IMR-90 (cell line): ENCODE measurements at regions of chr3 and their contacts with region 1.

Region 1: DNA sequence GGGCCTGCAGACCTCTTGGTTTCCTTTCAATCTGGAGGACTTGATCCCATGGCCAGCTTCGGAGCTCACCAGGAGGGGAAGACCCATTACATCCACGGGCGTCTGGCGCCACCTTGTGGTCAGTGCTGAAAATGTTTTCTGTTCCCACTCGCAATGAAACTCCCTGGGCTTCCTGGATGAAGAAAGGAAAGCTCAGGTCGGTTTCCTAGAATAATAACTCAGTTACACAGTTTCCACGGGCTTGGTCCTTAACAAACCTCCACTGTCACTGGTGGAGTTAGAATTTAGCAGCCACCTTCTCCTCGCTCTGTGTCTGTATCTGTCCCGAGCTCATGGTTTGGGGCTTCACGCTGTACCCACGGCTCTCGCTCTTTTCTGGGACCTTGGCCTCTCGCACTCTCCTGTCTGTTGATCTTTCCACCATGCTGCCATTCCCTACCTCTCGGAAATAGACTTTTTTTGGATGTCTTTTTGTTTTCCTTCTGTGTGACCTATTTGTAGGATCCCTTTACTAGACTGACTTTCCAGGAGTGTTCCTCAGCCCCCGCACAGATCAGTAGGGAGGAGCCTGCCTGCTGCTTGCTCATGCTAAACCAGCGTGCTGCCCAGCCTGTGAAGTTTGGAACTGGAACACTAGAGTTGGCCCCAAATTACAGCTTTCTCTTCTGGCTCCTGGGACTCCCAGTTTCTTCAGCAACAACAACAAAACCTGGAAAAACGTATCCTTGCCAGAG is 56.3 kb downstream of the IL20RB start:
- DNase-seq: peak; percentile 86
- ATAC-seq: peak; percentile 92
- H3K4me3 ChIP-seq: peak overlapping the region; percentile 42
- H3K27ac ChIP-seq: peak overlapping the region; percentile 24
- H3K4me1 ChIP-seq: peaks cover 4% of the 10 kb centered on the region; the same call in 1 of the 2 replicates
- H3K27me3 ChIP-seq: no peaks in the 10 kb centered on the region
- CTCF ChIP-seq: peak; percentile 95
- POLR2A ChIP-seq: peak; percentile 63; the same call in 1 of the 2 replicates
- RAD21 ChIP-seq: peak; percentile 99

Region 2: DNA sequence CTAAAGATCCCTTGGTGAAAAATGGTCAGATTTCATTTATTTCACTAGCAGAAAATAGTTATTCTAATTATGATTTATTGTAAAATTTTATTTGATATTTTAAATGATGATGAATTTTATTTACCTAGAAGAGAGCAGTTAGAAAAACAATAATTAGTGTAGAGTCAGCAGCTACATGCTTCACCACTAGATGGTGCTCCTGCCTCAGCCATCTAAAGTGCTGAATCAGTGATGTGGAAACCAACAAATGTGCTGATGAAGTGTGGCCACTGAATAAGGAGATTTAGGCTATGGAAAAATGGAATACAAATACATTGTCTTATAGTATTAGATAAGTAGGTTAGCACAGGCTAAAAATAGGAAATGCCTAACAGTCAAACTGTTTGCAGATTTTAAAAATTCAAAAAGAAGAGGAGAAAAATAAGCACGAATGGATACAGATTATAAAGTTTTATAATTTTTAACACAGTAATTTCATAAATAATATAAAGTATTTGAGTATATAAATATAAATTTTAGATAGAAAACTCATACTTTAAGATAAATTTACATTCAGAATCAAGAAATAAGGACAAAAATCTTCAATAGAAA is 938.8 kb before region 1 on chr3:
- CTCF ChIA-PET with region 1: no interaction called
- POLR2A ChIA-PET with region 1: no interaction called
- dilution Hi-C with region 1: no loop called
- in situ Hi-C with region 1: no loop called
- intact Hi-C with region 1: loop called (anchors 1 kb)
- DNase-seq: peak; percentile 80
- ATAC-seq: peak; percentile 62
- H3K4me3 ChIP-seq: no peak overlapping the region
- H3K27ac ChIP-seq: no peak overlapping the region
- H3K4me1 ChIP-seq: peaks cover 10% of the 10 kb centered on the region
- H3K27me3 ChIP-seq: no peaks in the 10 kb centered on the region
- CTCF ChIP-seq: peak; percentile 96
- POLR2A ChIP-seq: no peak
- RAD21 ChIP-seq: peak; percentile 95

Region 3: GRCh38 chr3:136300444-136300843 is 713.7 kb before region 1 on chr3:
- CTCF ChIA-PET with region 1: interaction called, 10 read pairs
- POLR2A ChIA-PET with region 1: no interaction called
- dilution Hi-C with region 1: no loop called
- in situ Hi-C with region 1: loop called (anchors 5 kb)
- intact Hi-C with region 1: no loop called
- DNase-seq: no peak
- ATAC-seq: no peak
- H3K4me3 ChIP-seq: no peak overlapping the region
- H3K27ac ChIP-seq: no peak overlapping the region
- H3K4me1 ChIP-seq: no peaks in the 10 kb centered on the region
- H3K27me3 ChIP-seq: no peaks in the 10 kb centered on the region
- CTCF ChIP-seq: no peak
- POLR2A ChIP-seq: no peak
- RAD21 ChIP-seq: no peak

Region 4: DNA sequence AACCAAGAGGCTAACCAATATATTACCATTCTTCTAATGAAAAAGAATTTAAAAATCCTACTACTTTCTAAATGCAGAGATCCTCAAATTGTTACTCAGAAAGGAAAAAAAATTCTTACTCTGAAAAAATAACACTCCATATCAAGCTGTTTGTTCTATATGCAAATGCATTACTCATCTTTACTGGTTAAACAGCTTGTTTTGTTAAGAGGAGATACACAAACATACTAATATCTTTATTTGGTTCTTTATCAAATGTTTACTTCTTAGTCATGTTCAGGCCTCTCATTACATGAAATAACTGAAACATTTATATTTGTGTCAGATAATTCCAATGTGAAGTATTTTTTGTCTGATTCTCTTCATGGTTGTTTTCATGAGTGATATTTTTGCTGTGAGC is 617.2 kb before region 1 on chr3:
- CTCF ChIA-PET with region 1: interaction called, 3 read pairs
- POLR2A ChIA-PET with region 1: no interaction called
- dilution Hi-C with region 1: no loop called
- in situ Hi-C with region 1: no loop called
- intact Hi-C with region 1: loop called (anchors 10 kb)
- DNase-seq: peak; percentile 73
- ATAC-seq: peak; percentile 81
- H3K4me3 ChIP-seq: no peak overlapping the region
- H3K27ac ChIP-seq: peak overlapping the region; percentile 93; the same call in 1 of the 2 replicates
- H3K4me1 ChIP-seq: peaks cover 8% of the 10 kb centered on the region
- H3K27me3 ChIP-seq: no peaks in the 10 kb centered on the region
- CTCF ChIP-seq: no peak
- POLR2A ChIP-seq: no peak
- RAD21 ChIP-seq: no peak

Region 5: DNA sequence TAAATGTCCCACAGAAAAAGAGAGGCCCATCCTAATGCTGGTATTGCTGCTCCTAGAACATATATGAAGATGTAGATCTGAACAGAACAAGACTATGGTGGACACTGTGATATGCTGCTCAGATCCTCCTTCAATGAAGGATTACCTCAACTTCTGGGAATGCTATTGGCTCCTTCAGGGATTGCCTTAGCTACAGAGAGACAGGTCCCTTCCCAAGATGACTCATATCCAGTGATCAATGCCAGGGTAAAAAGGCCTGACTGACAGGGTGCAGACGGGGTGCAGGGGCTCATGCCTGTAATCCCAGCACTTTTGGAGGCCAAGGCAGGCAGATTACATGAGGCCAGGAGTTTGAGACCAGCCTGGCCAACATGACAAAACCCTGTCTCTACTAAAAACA is 241.4 kb before region 1 on chr3:
- CTCF ChIA-PET with region 1: interaction called, 3 read pairs
- POLR2A ChIA-PET with region 1: no interaction called
- dilution Hi-C with region 1: no loop called
- in situ Hi-C with region 1: no loop called
- intact Hi-C with region 1: loop called (anchors 5 kb)
- DNase-seq: peak; percentile 53
- ATAC-seq: peak; percentile 70
- H3K4me3 ChIP-seq: no peak overlapping the region
- H3K27ac ChIP-seq: no peak overlapping the region
- H3K4me1 ChIP-seq: no peaks in the 10 kb centered on the region; the same call in 1 of the 2 replicates
- H3K27me3 ChIP-seq: no peaks in the 10 kb centered on the region
- CTCF ChIP-seq: no peak
- POLR2A ChIP-seq: no peak
- RAD21 ChIP-seq: no peak

Region 6: DNA sequence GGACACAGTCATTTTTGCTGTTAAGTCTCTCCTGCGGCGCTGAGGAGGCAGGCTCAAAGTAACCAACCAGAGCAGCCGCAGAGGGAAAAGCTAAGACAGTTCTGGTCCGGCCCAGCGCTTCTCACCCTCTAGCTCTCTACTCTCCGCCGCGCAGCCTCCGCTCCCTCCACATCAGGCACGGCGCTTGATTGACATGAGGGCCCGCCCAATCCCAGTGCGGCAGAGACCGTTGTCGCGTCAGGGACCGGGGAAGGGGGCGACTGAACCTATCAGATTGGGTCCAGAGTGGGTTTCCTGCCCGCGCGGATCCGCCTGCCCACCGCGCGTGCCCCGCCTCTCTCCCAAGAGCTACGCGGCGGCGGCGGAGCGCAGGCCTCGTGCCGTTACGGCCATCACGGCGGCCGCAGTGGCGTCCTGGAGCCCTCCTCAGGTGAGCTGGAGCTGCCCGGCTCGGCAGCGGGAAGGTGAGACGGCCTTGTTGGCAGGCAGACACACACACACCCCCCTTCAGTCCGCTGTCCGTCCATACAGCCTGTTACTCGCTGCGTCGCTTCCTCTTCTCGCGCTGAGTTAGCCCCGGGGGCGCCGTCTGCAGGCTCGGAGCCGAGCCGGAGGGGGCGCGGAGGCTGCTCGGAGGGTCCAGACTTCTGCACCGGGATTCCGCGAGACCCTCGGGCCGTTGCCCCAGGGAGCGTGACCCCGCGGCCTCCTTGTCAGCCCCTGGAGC is 152.1 kb before region 1 on chr3 and contains the start of gene NCK1:
- CTCF ChIA-PET with region 1: interaction called, 12 read pairs
- POLR2A ChIA-PET with region 1: no interaction called
- dilution Hi-C with region 1: no loop called
- in situ Hi-C with region 1: no loop called
- intact Hi-C with region 1: loop called (anchors 2 kb)
- DNase-seq: peak; percentile 98
- ATAC-seq: peak; percentile 98
- H3K4me3 ChIP-seq: peak within 1 kb of the TSS; percentile 85
- H3K27ac ChIP-seq: peak within 1 kb of the TSS; percentile 94
- H3K4me1 ChIP-seq: peaks cover 6% of the 10 kb centered on the region
- H3K27me3 ChIP-seq: no peaks in the 10 kb centered on the region
- CTCF ChIP-seq: 0 out of 2 replicates have a peak, but pooled peaks have one; percentile 3
- POLR2A ChIP-seq: peak; percentile 81
- RAD21 ChIP-seq: no peak
- total RNA-seq, gene NCK1: 23.7 and 50.3 TPM in 2 replicates

Region 7: GRCh38 chr3:136955813-136956212 is 58.3 kb before region 1 on chr3:
- CTCF ChIA-PET with region 1: interaction called, 12 read pairs
- POLR2A ChIA-PET with region 1: no interaction called
- dilution Hi-C with region 1: no loop called
- in situ Hi-C with region 1: no loop called
- intact Hi-C with region 1: no loop called
- DNase-seq: peak; percentile 96
- ATAC-seq: peak; percentile 87
- H3K4me3 ChIP-seq: no peak overlapping the region
- H3K27ac ChIP-seq: peak overlapping the region; percentile 66; the same call in 1 of the 2 replicates
- H3K4me1 ChIP-seq: peaks cover 24% of the 10 kb centered on the region
- H3K27me3 ChIP-seq: no peaks in the 10 kb centered on the region
- CTCF ChIP-seq: no peak
- POLR2A ChIP-seq: no peak
- RAD21 ChIP-seq: no peak